ENCODE measurements at regions of chr11 and their contacts with region 1.

Region 1: DNA sequence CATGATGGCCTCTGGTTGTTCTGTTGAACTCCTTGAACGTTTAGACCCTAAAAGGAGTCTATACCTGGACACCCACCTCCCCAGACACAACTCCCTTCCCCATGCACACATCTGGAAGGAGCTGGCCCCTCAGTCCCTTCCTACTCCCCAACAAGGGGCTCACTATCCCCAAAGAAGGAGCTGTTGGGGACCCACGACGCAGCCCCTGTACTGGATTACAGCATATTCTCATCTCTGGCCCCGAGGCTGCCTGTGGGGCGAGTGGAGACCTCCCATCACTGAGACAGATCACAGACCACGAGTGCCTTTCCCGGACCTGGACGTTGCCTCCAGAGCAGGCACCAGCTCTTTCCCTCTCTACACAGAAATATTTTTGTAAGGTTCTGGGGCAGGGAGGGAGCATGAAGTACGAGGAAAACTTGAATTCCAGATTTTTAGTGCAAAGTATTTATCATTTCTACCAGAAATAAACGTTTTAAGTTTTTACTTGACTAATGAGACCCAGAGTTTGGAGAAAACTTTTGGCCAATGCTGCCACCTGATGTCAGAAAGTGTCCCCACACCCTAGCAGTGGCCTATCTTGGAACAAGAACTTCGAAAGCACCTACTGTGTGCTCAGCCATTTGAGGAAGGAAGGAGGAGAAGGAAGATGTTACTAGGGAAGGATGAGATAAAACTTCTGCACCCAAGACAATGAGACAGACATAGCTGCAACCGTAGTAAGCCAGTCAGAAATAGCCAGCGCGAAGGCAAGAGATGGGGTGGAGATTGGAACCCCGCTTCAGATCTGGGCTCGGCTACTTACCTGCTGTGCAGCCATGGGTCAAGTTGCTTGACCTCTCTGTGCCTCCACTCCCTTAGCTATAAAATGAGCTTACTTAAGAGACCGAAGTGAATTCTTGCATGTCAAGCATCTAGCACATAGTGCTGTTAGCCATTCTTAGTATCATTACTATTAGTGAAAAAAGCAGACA is 10.2 kb upstream of the POU2F3 start:
- DNase-seq: peak; percentile 57
- ATAC-seq: peak; percentile 49
- H3K4me3 Mint-ChIP-seq: no peak overlapping the region
- H3K27ac Mint-ChIP-seq: no peak overlapping the region
- H3K4me1 Mint-ChIP-seq: peaks cover 14% of the 10 kb centered on the region
- H3K27me3 Mint-ChIP-seq: peaks cover 2% of the 10 kb centered on the region; the same call in 1 of the 2 replicates
- CTCF ChIP-seq: peak; percentile 41

Region 2: DNA sequence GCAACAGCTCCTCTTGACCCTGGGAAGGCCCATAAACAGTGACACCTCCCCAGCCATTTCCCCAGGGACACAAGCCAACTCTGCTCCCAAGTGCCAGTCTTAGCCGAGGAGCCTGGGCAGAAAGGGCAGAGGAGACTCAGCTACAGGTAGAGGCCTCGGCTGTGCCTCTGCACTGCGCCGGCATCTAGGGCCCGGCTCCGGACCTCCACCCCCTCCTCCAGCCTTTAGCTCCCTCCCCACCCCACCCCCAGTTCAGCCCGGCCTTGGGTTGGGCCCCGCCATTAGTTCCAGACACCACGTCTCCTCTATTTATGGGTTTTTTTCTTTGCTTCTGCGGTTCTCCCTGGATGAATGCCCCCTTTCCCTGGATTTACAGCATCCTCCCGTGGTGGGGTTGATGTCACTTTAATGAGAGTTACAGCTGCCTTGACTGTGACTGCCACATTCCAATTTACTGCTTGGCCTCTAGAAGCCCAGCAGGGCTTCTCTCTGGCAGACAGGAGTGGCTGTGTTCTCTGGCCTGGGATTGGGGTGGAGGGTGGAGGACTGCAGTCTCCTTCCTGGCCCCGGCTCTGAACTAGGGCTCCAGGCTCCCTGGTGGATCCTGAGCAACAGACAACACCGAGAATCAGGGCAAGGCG is 32.4 kb before region 1 on chr11:
- CTCF ChIA-PET with region 1: interaction called, 10 read pairs
- POLR2A ChIA-PET with region 1: no interaction called
- DNase-seq: no peak
- ATAC-seq: peak; percentile 70
- H3K4me3 Mint-ChIP-seq: no peak overlapping the region; the same call in 1 of the 2 replicates
- H3K27ac Mint-ChIP-seq: no peak overlapping the region
- H3K4me1 Mint-ChIP-seq: peaks cover 47% of the 10 kb centered on the region
- H3K27me3 Mint-ChIP-seq: peaks cover 79% of the 10 kb centered on the region
- CTCF ChIP-seq: no peak

Region 3: DNA sequence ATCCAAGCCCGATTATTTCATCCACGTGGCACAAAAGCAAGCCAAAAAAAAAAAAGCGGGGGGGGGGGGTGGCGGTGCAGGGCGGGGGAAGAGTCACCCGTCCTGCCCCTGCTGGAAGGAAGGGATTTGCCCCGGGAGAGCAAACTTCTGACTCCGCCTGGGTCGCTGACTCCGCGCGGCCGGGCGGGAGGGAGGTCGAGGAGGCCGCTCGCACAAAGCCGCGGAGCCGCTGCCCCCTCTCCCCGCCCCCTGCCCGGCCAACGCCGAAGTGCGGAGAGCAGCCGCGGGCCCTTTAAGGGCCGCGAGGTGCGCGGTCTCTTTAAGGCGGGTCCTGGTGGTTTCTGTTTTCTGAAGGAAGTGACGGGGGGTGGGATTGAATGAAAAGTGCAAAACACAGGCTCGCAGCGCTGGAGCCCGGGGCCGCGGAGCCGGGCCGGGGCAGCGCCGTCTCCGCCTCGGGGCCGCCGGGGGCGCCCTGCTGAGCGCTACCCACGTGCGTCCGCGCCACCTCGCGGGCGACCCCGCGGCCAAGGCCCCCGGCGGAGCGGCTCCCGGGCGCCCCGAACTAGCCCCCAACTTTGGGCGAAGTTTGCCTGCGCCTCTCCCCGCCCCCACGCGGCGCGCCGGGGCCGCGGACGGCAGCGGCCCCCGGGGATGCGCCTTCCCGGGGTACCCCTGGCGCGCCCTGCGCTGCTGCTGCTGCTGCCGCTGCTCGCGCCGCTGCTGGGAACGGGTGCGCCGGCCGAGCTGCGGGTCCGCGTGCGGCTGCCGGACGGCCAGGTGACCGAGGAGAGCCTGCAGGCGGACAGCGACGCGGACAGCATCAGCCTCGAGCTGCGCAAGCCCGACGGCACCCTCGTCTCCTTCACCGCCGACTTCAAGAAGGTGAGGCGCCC is 18.9 kb before region 1 on chr11 and contains the start of gene OAF:
- CTCF ChIA-PET with region 1: interaction called, 13 read pairs
- POLR2A ChIA-PET with region 1: no interaction called
- DNase-seq: peak; percentile 87
- ATAC-seq: peak; percentile 85
- H3K4me3 Mint-ChIP-seq: peak within 1 kb of the TSS; percentile 79
- H3K27ac Mint-ChIP-seq: no peak within 1 kb of the TSS
- H3K4me1 Mint-ChIP-seq: peaks cover 26% of the 10 kb centered on the region
- H3K27me3 Mint-ChIP-seq: peaks cover 94% of the 10 kb centered on the region
- CTCF ChIP-seq: no peak
- total RNA-seq, gene OAF: 3.2 to 5.6 TPM (median 4.2 TPM) in 3 replicates

Region 4: GRCh38 chr11:120248551-120249278 is 19.0 kb after region 1 on chr11:
- CTCF ChIA-PET with region 1: interaction called, 26 read pairs
- POLR2A ChIA-PET with region 1: no interaction called
- DNase-seq: no peak
- ATAC-seq: peak; percentile 18
- H3K4me3 Mint-ChIP-seq: no peak overlapping the region
- H3K27ac Mint-ChIP-seq: 0 out of 2 replicates have a peak overlapping the region, but pooled peaks have one; percentile 13
- H3K4me1 Mint-ChIP-seq: peaks cover 47% of the 10 kb centered on the region
- H3K27me3 Mint-ChIP-seq: peaks cover 56% of the 10 kb centered on the region
- CTCF ChIP-seq: no peak

Region 5: DNA sequence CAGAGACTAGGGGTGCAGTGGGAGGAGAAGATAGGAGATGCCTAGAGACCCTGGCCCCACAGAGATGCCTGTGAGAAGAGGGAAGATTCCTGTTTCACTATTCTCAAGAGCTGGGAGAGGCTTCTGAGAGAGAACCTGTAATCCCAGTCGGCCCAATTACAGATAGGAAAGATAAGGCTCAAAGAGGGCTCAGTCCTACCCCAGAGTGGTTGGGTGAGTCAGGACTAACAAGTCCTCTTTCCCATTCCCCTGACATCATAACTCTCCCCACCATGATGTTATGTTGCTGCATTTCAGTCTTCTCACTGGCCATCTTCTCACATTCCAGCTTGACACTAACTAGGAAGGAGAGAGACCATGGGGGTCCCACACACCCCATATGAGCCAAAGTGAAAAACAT is 124.3 kb after region 1 on chr11:
- CTCF ChIA-PET with region 1: no interaction called
- POLR2A ChIA-PET with region 1: no interaction called
- DNase-seq: no peak
- ATAC-seq: no peak
- H3K4me3 Mint-ChIP-seq: no peak overlapping the region
- H3K27ac Mint-ChIP-seq: no peak overlapping the region
- H3K4me1 Mint-ChIP-seq: peaks cover 26% of the 10 kb centered on the region
- H3K27me3 Mint-ChIP-seq: no peaks in the 10 kb centered on the region
- CTCF ChIP-seq: no peak

Measured in WTC11 (cell line).